Dendritic cell treated with granulocyte-macrophage colony-stimulating factor and Interleukin-4, amounts not matched to agents 40 ng/mL and 50 ng/mL, for 4 days (primary cell): ENCODE measurements at regions of chr11 and their contacts with region 1.

Region 1: DNA sequence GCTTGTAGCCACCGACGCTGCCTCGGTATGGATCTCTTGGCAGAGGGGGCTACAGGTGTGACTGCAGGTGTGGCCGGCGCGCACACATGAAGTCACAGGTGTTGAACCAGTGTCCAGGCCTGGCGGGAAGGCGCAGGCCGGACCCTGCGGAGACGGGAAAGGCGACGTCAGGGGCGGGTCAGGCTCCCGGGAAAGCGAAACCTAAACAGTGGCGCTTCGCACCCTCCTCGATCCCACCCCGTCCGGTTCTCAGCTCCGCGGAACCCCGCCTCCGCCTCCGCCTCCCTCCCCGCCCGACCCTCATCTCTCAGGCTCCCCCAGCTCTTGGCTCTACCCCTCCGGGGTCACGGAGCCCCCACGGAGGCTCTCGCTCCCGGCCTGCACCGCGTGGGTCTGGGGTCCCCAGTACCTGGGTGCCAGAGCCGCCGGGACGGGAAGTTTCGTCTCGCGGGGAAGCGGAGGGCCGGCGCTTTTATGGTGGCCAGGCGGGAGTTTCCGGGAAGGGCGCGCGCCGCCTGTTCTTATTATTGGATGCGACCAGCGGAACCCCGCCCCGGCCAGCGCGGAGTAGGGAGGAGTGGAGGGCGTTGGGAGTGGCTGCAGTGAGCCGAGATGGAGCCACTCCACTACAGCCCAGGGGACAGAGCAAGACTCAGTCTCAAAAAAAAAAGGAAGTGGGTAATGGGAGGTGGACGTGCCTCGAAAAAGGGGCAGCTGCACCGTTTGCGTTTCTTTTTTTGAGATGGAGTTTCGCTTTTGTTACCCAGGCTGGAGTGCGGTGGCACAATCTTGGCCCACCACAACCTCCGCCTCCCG is at the start of gene IRF7:
- H3K4me3 Mint-ChIP-seq: peak within 1 kb of the TSS; percentile 86
- H3K27ac Mint-ChIP-seq: peak within 1 kb of the TSS; percentile 95
- H3K4me1 Mint-ChIP-seq: peaks cover 69% of the 10 kb centered on the region
- H3K27me3 Mint-ChIP-seq: no peaks in the 10 kb centered on the region

Region 2: DNA sequence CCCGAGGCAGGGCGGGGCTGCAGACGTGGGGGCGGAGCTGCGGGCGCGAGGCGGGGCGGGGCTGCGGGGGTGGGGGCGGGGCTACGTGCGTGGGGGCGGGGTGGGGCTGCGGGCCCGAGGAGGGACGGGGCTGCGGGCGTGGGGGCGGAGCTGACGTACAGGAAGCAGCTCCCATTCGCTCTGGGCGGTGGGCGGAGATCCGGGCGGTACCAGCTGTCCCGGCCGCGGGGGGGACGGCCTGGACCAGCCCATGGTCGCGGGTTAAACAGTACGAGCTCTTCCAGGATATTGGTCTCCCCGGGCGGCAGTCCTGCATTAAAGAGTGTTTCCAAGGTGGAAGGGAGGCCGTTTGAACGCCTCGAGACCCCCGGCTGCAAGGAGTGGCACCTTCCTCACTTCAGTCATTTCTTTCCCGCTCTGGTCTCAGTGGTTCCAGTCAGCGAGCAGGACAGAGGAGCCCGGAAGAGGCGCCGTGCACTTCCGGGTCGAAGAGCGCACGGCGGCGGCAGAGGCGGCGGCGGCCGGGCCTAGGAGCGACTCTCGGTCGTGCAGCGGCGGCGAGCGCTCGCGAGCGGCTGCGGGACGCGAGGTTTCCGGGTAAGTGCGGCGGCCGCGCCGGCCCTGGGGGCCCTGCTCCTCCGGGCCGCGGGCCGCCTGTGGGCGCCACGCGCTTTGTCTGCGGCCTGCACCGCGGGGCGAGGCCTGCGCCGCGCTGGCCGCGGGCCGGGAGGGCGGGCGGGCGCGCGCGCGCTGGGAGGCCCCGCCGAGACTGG is 39.5 kb before region 1 on chr11 and contains the start of gene PHRF1:
- intact Hi-C with region 1: loop called (anchors 5 kb)
- H3K4me3 Mint-ChIP-seq: peak within 1 kb of the TSS; percentile 96
- H3K27ac Mint-ChIP-seq: peak within 1 kb of the TSS; percentile 100
- H3K4me1 Mint-ChIP-seq: peaks cover 53% of the 10 kb centered on the region
- H3K27me3 Mint-ChIP-seq: peaks cover 34% of the 10 kb centered on the region

Region 3: DNA sequence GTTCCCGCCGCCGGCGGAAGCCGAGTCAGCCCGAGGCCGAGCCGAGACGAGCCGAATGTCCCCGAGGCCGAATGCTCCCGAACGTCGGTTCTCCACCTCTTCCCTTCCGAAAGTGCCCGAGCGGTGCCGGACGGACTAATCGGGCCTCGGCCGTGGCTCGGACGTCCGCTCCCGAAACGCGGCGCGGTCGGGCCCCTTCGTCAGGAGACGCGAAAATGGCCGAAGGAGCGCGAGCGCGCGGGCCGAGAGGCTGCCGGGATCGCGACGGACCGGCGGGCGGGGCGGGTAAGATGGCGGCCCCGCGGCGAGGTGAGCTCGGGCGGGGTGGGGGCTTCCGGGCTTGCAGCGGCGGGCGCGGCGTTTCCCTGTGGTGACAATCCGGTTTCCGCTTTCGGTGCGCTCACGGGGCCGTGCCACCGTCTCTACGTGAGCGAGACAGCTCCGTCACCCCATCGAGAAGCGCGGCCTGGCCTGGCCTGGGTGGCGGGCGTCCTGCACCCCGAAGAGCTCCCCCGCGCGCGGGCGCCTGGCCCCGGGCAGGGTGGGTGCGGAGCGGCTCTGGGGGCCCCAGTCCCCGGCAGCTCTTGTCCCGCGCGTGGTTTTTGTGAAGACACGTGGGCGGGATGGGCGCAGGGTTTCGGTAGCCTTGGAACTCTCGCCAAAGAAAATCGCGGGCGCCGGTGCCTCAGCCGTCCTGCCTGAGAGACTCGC is 80.0 kb after region 1 on chr11 and contains the start of gene TMEM80:
- intact Hi-C with region 1: loop called (anchors 2 kb)
- H3K4me3 Mint-ChIP-seq: peak within 1 kb of the TSS; percentile 76
- H3K27ac Mint-ChIP-seq: peak within 1 kb of the TSS; percentile 98
- H3K4me1 Mint-ChIP-seq: peaks cover 58% of the 10 kb centered on the region
- H3K27me3 Mint-ChIP-seq: no peaks in the 10 kb centered on the region